ENCODE measurements at regions of chr19 and their contacts with region 1.

Region 1: DNA sequence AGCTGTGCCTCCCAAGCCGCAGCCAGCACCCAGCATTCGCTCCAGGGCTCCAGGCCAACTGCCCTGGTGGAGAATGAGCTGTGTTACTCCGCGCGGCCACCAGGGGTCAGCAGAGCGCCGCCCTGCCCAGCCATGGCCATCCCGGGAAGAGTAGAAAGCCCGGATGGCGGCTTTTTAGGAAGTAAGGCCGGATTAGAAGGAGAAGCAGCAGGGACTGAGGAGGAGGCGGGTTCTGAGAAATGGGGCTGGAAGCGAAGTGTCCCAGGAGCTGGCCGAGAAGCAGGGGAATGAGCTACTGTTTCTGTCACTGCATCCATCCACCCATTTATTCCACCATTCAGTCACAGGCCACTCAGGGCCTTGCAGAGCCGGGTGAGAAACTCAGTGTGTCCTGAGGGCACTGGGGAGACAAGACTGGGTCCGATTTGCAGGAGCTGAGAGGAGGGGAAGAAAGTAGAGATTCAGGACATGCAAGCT is 6.6 kb upstream of the NPAS1 start:
- DNase-seq: peak; percentile 91
- H3K4me3 Mint-ChIP-seq: peak overlapping the region; percentile 18
- H3K27ac Mint-ChIP-seq: no peak overlapping the region
- H3K4me1 Mint-ChIP-seq: peaks cover 9% of the 10 kb centered on the region
- H3K27me3 Mint-ChIP-seq: peaks cover 16% of the 10 kb centered on the region

Region 2: DNA sequence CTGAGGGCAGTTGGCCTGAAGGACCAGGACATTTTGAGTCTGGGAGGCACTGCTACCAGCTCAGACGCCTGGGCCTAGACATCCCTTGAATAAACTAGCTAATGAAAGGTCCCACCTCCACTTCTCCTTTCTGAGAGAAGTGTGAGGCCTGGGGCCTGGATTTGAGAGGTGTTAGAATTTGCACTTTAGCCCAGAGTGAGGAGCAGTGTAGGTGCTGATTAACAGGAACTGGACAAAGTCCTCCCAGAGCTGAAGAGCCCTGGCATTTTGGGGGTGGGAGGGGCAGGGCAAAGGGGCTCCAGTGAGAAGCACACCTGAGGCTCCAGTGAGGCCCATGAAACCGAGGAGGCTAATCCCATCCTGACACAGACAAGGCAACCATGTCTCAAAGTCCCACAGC is 209.5 kb before region 1 on chr19:
- intact Hi-C with region 1: no loop called
- DNase-seq: no peak
- H3K4me3 Mint-ChIP-seq: no peak overlapping the region
- H3K27ac Mint-ChIP-seq: no peak overlapping the region
- H3K4me1 Mint-ChIP-seq: no peaks in the 10 kb centered on the region
- H3K27me3 Mint-ChIP-seq: peaks cover 1% of the 10 kb centered on the region

Region 3: GRCh38 chr19:46850228-46851203 is 162.6 kb before region 1 on chr19 and contains the start of gene AP2S1:
- intact Hi-C with region 1: no loop called
- DNase-seq: peak; percentile 98
- H3K4me3 Mint-ChIP-seq: peak within 1 kb of the TSS; percentile 90
- H3K27ac Mint-ChIP-seq: peak within 1 kb of the TSS; percentile 74
- H3K4me1 Mint-ChIP-seq: peaks cover 18% of the 10 kb centered on the region
- H3K27me3 Mint-ChIP-seq: no peaks in the 10 kb centered on the region
- total RNA-seq, gene AP2S1: 100 and 112 TPM in 2 replicates

Region 4: GRCh38 chr19:47124937-47125668 is 112.0 kb after region 1 on chr19:
- intact Hi-C with region 1: loop called (anchors 1 kb)
- DNase-seq: peak; percentile 72
- H3K4me3 Mint-ChIP-seq: no peak overlapping the region
- H3K27ac Mint-ChIP-seq: peak overlapping the region; percentile 71
- H3K4me1 Mint-ChIP-seq: peaks cover 5% of the 10 kb centered on the region
- H3K27me3 Mint-ChIP-seq: peaks cover 2% of the 10 kb centered on the region

Measured in activated CD4-positive, alpha-beta T cell treated with anti-CD3 and anti-CD28 coated beads, Interleukin-2, amount 10 ng/mL, durations not matched to agents 24 days and 14 days (primary cell).